Left ventricle myocardium inferior (tissue), 1 donor: ENCODE measurements at regions of chr3 and their contacts with region 1.

Region 1: GRCh38 chr3:55160241-55160983 is 232.6 kb upstream of the LRTM1 start:
- DNase-seq: peak; percentile 23
- H3K4me3 ChIP-seq: no peak overlapping the region
- H3K27ac ChIP-seq: no peak overlapping the region
- H3K4me1 ChIP-seq: no peaks in the 10 kb centered on the region
- H3K27me3 ChIP-seq: peaks cover 28% of the 10 kb centered on the region
- CTCF ChIP-seq: no peak

Region 2: GRCh38 chr3:54653456-54654195 is 506.8 kb before region 1 on chr3:
- intact Hi-C with region 1: no loop called
- DNase-seq: no peak
- H3K4me3 ChIP-seq: no peak overlapping the region
- H3K27ac ChIP-seq: no peak overlapping the region
- H3K4me1 ChIP-seq: no peaks in the 10 kb centered on the region
- H3K27me3 ChIP-seq: no peaks in the 10 kb centered on the region
- CTCF ChIP-seq: no peak

Region 3: DNA sequence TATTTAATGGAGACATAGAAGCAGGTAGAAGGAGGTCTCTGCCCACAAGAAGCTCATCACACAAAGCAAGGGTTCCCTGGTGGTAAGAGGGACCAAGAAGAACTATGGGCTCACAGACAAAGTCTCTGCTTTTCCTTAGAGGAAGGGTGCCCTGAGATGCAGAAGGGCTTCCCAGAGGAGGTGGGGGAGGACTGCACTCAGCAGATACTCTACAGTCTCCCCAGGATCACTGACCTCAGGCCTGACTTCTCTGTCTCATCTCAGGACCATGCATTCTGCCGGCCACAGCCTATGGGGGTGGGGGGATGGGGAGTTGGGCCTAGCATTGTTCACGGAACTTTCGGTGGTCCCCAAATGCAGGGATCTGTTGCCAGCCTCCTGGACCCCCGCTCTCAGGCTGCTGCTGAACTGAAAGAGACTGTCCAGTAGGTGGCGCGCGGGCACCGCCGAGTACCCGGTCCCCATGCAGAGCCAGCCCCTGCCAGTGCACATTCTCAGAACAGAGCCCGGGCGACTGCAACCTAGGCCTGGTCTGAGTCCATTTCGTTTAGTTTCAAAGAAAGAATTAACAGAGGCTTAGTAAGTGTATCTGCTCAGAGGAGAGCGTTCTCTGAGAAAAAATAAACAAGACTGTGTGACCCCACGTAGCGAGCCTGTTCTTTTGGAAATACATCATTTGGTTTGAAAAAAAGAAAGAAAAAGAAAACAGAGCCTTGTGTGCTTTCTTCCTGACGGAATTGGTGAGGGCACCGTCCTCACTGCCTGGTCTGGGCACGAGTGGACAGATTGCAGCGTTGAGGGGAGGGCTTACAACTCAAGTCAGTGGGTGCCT is 306.6 kb before region 1 on chr3:
- intact Hi-C with region 1: loop called (anchors 10 kb)
- DNase-seq: peak; percentile 70
- H3K4me3 ChIP-seq: no peak overlapping the region
- H3K27ac ChIP-seq: no peak overlapping the region
- H3K4me1 ChIP-seq: peaks cover 7% of the 10 kb centered on the region
- H3K27me3 ChIP-seq: no peaks in the 10 kb centered on the region
- CTCF ChIP-seq: peak; percentile 89

Region 4: GRCh38 chr3:55042591-55042990 is 117.8 kb before region 1 on chr3:
- intact Hi-C with region 1: no loop called
- DNase-seq: no peak
- H3K4me3 ChIP-seq: no peak overlapping the region
- H3K27ac ChIP-seq: no peak overlapping the region
- H3K4me1 ChIP-seq: no peaks in the 10 kb centered on the region
- H3K27me3 ChIP-seq: no peaks in the 10 kb centered on the region
- CTCF ChIP-seq: no peak